Naive thymus-derived CD8-positive, alpha-beta T cell (primary cell): ENCODE measurements at regions of chr21 and their contacts with region 1.

Region 1: DNA sequence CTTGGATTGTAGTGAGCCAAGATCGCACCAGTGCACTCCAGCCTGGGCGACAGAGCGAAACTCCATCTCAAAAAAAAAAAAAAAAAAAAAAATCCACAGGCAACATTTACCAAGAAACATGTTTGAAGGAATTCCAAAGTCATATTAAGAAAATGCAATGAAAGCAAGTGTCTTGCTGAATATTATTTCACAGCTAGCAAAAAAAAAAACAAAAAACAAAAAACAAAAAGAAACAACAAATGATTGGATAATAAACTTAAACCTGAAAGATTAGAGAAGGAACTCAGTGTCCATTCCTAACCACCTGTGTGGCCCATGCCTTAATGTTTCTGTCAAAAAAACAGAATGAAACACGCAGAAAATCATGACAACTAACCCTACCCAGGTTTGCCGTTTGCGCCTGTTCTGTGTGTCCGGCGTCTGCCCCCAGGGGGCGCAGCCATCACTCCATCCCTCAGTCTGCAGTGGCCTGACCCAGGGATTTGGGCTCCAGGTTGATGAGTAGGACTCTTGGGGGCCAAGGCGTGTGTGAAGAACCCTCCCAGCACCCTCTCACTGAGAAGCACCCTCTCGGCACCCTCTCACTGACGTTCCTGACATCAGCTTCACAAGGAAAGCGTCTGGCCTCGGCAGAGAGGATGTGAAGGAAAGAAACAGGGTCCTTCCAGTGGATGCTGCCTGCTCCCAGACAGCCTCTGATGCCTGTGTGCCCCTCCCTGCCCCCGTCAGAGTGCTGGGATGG is 19.2 kb upstream of the PTTG1IP start:
- DNase-seq: peak; percentile 61 to 81 (median 72)
- ATAC-seq: peak; percentile 87 to 90
- H3K4me3 Mint-ChIP-seq: peak overlapping the region in 1 of 10 donors; percentile 18
- H3K27ac Mint-ChIP-seq: peak overlapping the region; percentile 44 to 91 (median 79)
- H3K4me1 Mint-ChIP-seq: peaks cover 8 to 32% (median 22%) of the 10 kb centered on the region in 4 donors
- H3K27me3 Mint-ChIP-seq: no peaks in the 10 kb centered on the region

Region 2: DNA sequence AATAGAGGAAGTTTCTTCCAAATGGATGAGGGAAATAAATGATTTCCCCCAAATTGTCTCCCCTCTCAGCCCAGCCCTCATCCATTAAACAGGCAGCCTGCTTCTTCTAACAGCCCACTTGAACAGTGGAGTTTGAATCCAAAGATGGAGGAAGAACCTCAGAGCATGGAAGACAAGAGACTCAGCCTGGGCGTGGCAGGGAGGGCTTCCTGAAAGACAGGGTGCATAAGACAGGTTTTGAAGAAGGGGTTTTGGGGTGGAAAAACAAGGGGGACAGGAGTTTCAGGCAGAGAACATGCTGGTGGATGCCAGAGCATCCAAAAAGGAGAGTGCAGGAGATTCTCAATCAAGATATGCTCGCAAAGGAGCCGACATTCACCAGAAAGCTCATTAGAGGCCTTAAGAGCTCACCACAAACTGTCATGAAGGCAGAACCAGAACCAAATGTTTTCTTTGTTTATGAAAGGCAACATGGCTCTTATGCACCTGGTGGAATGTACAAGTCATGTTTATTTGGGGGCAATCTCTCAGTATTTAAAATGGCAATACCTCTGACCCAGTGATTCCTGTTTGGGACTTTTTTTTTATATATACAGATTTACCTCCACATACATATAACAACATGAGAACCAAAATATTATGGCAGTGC is 154.9 kb before region 1 on chr21:
- POLR2A ChIA-PET with region 1: no interaction called
- DNase-seq: peak in 1 of 10 donors; percentile 23
- ATAC-seq: no peak
- H3K4me3 Mint-ChIP-seq: no peak overlapping the region
- H3K27ac Mint-ChIP-seq: peak overlapping the region in 4 of 10 donors; percentile 10 to 82 (median 70)
- H3K4me1 Mint-ChIP-seq: peaks cover 4 to 11% (median 7%) of the 10 kb centered on the region in 4 donors
- H3K27me3 Mint-ChIP-seq: no peaks in the 10 kb centered on the region

Region 3: GRCh38 chr21:44920694-44921604 is 28.2 kb after region 1 on chr21 and contains the start of gene ITGB2:
- POLR2A ChIA-PET with region 1: interaction called, 238 read pairs
- DNase-seq: peak in 8 of 10 donors; percentile 38 to 80 (median 58)
- ATAC-seq: peak; percentile 63 to 73
- H3K4me3 Mint-ChIP-seq: peak within 1 kb of the TSS; percentile 93 to 100 (median 98)
- H3K27ac Mint-ChIP-seq: peak within 1 kb of the TSS; percentile 92 to 99 (median 96)
- H3K4me1 Mint-ChIP-seq: peaks cover 42 to 88% (median 81%) of the 10 kb centered on the region in 4 donors
- H3K27me3 Mint-ChIP-seq: no peaks in the 10 kb centered on the region
- polyA plus RNA-seq, gene ITGB2: 423 to 549 (median 524) TPM